Esophagus muscularis mucosa (tissue), 4 donors: ENCODE measurements at regions of chr9 and their contacts with region 1.

Region 1: DNA sequence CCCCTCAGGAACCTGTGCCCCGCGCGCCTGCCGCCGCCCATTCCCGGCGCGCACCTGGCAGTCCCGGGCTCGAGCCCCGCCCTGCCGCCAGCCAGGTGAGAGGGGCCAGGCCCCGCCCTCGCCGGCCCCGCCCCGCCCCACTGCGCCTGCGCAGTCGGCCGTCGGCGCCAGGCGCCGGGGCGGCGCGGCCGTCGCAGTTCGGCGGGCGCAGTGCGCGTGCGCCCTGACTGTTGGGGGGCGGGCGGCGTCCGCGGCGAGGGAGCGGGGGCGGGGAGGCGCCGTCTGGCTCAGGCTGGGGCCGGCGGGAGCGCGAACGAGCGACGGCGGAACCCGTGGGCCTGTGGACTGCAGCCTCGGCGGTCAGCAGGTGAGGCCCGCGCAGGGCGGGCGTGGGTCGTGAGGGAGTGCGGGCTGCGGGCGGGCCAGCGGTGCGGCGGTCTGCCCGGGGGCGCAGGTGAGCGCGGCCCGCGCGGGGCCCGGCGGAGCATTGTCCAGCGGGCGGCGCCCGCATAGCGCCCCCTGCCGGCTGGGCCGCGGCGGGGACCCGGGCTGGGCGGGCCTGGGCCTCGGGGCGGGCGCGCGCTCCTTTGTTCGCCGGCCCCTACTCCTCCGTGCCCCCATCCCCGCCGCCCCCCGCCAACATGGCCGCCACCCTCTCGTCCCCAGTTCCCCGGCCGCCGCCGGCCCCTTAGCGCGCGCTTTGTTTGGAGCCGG is at the start of gene SPIN1:
- DNase-seq: peak; percentile 92
- H3K4me3 ChIP-seq: peak within 1 kb of the TSS; percentile 90 to 98 (median 98)
- H3K27ac ChIP-seq: peak within 1 kb of the TSS; percentile 93 to 97 (median 96)
- H3K4me1 ChIP-seq: peaks cover 20 to 53% (median 44%) of the 10 kb centered on the region in 4 donors
- H3K27me3 ChIP-seq: no peaks in the 10 kb centered on the region
- CTCF ChIP-seq: peak; percentile 46 to 69 (median 64)
- EP300 ChIP-seq: no peak
- POLR2A ChIP-seq: no peak
- total RNA-seq, gene SPIN1: 68.5 to 100 (median 81.5) TPM

Region 2: DNA sequence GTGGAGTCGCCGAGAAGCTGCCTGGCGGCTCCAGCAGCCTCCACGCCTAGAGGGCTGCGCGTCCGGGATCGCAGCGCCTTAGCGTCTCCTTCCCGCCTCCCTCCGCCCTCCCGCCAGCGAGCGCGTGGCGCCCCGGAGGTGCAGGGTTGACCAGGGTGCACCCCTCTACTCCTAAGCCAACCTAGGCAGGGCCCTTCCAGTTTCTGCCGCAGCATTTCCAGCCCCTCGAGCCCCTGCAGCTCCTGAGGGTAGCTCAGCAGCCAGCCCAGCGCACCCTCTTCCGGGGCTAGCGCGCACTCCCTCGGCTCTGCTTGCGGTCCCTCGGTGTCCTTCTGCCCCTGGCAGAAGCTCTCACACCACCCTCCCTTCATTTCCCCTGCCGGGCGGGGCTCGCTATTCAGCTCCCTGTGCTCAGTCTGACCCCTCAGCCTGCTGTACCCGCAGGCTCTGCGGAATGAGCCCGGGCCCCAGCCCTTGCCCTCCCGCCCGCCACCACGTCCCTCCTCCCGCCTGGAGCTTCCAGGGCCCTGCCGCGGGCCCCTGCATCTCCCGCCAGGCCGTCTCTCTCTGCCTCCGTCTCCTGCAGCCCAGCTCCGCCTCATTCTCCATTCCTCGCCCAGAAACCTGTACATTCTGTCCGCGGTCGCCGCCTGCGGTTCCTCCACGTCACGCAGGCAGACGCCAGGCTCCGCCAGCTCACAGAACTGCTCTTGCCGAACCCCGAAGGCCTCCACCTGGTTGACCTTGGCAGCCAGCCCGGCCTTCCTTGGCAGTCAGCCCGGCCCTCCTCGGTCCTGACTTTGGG is 311.8 kb before region 1 on chr9:
- intact Hi-C with region 1: loop called (anchors 5 kb)
- DNase-seq: no peak
- H3K4me3 ChIP-seq: peak overlapping the region; percentile 57 to 68 (median 65)
- H3K27ac ChIP-seq: peak overlapping the region; percentile 82 to 89 (median 86)
- H3K4me1 ChIP-seq: peaks cover 9 to 20% (median 18%) of the 10 kb centered on the region in 4 donors
- H3K27me3 ChIP-seq: no peaks in the 10 kb centered on the region
- CTCF ChIP-seq: peak in 1 of 3 experiments; percentile 31
- EP300 ChIP-seq: peak; percentile 19
- POLR2A ChIP-seq: no peak

Region 3: GRCh38 chr9:88106491-88106890 is 281.8 kb before region 1 on chr9:
- intact Hi-C with region 1: loop called (anchors 10 kb)
- DNase-seq: no peak
- H3K4me3 ChIP-seq: no peak overlapping the region
- H3K27ac ChIP-seq: no peak overlapping the region
- H3K4me1 ChIP-seq: no peaks in the 10 kb centered on the region
- H3K27me3 ChIP-seq: peaks cover 0 to 7% (median 0%) of the 10 kb centered on the region in 4 donors
- CTCF ChIP-seq: peak; percentile 59 to 70 (median 63)
- EP300 ChIP-seq: no peak
- POLR2A ChIP-seq: no peak

Region 4: DNA sequence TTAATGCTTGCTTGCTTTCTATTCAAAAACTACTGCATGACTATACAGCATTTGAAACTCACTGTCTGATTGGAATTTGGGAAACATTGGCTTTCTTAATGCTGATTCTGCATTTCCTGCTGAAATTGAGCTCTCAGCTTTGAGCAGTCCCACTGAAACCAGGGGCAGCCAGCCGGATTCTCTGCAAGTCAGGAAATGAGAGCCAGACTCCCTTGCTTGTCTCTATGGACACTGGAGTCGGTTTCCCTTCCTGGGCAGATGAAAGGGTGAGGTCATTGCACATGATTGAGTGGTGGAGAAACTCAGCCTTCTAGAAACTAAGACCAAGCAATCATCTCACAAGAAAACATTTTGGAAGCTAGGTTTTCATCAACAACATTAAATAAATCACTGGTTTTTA is 130.3 kb before region 1 on chr9:
- intact Hi-C with region 1: loop called (anchors 10 kb)
- DNase-seq: no peak
- H3K4me3 ChIP-seq: no peak overlapping the region
- H3K27ac ChIP-seq: peak overlapping the region in 1 of 4 donors; percentile 42
- H3K4me1 ChIP-seq: peaks cover 13 to 18% (median 15%) of the 10 kb centered on the region in 4 donors
- H3K27me3 ChIP-seq: no peaks in the 10 kb centered on the region
- CTCF ChIP-seq: no peak
- EP300 ChIP-seq: no peak
- POLR2A ChIP-seq: no peak

Region 5: GRCh38 chr9:88534456-88535261 is 146.3 kb after region 1 on chr9 and contains the start of gene NXNL2:
- intact Hi-C with region 1: loop called (anchors 5 kb)
- DNase-seq: peak; percentile 94
- H3K4me3 ChIP-seq: peak within 1 kb of the TSS; percentile 61 to 73 (median 62)
- H3K27ac ChIP-seq: peak within 1 kb of the TSS; percentile 75 to 92 (median 84)
- H3K4me1 ChIP-seq: peaks cover 11 to 59% (median 29%) of the 10 kb centered on the region in 4 donors
- H3K27me3 ChIP-seq: peaks cover 0 to 4% (median 0%) of the 10 kb centered on the region in 4 donors
- CTCF ChIP-seq: no peak
- EP300 ChIP-seq: no peak
- POLR2A ChIP-seq: no peak
- total RNA-seq, gene NXNL2: 0.83 to 4.5 (median 1.3) TPM

Region 6: DNA sequence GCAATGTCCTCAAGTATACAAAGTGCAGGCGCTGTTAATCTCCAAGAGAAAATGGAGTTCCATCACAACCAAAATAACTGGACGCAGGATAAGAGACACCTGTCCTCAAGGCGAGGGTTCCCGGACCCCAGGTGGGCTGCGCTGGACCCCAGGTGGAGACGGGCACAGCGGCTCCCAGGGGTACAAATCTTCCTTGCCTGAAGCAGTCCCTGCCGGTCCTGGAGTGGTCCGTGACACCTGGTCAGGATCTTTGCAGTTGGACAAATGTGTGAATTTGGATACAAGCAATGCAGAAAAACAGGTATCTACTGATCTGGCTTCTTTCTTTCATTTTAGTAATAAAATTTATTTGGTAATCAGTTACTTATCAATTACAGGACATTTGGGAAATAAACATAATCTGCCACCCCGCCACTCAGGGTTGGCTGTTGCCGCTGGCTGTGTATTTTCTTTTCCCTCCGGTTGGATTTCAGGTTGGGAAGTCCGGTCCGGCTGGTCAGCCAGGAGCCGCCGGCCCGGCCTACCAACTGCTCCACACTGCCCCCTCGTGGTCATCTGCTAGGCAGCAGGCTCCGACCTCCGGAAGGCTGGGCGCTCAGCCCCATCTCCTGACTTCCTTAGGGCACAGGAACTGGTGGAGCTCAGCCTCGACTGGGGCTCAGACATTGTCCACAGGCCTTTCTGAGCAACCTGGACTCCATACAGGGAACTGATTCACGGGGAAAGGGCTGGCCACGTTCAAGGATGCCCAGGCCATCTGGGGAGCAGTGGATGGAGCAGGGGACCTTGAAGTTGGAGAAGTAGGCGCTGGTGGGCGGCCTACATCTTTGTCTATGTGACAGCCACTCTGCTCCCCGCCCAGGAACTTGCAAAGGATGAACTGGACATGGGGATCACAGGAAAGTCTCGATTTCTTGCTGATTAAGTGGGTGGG is 190.1 kb after region 1 on chr9:
- intact Hi-C with region 1: loop called (anchors 5 kb)
- DNase-seq: peak; percentile 96
- H3K4me3 ChIP-seq: peak overlapping the region in 2 of 4 donors; percentile 10 to 25
- H3K27ac ChIP-seq: no peak overlapping the region
- H3K4me1 ChIP-seq: peaks cover 0 to 32% (median 22%) of the 10 kb centered on the region in 4 donors
- H3K27me3 ChIP-seq: no peaks in the 10 kb centered on the region
- CTCF ChIP-seq: peak in 2 of 3 experiments; percentile 91 to 97
- EP300 ChIP-seq: no peak
- POLR2A ChIP-seq: no peak